ENCODE measurements at regions of chr9 and their contacts with region 1.

Region 1: DNA sequence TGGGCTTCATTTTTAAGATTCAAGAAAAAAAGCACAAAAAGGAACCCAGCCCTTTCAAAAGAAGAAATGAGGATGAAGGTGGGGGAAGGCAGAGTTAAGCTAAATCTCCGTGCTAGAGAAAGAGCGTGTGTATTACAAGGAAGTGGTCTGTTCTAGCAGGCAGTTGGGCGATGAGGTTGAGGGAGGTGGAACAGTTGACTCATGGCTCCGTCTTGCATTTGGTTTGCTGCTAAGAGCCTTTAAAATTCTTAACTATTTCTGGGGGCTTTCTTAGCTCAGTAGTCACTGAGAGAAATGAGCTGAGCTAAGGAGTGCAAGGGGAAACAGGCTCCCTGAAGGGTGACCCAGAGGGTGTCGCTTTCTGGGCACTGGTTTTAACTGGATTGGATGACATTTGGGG is 117.4 kb downstream of the GCNT1 start:
- DNase-seq: peak; percentile 57
- H3K4me3 Mint-ChIP-seq: no peak overlapping the region
- H3K27ac Mint-ChIP-seq: peak overlapping the region; percentile 73
- H3K4me1 Mint-ChIP-seq: peaks cover 29% of the 10 kb centered on the region
- H3K27me3 Mint-ChIP-seq: peaks cover 5% of the 10 kb centered on the region

Region 2: GRCh38 chr9:76023715-76024195 is 552.6 kb before region 1 on chr9:
- intact Hi-C with region 1: loop called (anchors 10 kb)
- DNase-seq: peak; percentile 32
- H3K4me3 Mint-ChIP-seq: peak overlapping the region; percentile 64
- H3K27ac Mint-ChIP-seq: peak overlapping the region; percentile 70
- H3K4me1 Mint-ChIP-seq: peaks cover 79% of the 10 kb centered on the region
- H3K27me3 Mint-ChIP-seq: no peaks in the 10 kb centered on the region

Region 3: DNA sequence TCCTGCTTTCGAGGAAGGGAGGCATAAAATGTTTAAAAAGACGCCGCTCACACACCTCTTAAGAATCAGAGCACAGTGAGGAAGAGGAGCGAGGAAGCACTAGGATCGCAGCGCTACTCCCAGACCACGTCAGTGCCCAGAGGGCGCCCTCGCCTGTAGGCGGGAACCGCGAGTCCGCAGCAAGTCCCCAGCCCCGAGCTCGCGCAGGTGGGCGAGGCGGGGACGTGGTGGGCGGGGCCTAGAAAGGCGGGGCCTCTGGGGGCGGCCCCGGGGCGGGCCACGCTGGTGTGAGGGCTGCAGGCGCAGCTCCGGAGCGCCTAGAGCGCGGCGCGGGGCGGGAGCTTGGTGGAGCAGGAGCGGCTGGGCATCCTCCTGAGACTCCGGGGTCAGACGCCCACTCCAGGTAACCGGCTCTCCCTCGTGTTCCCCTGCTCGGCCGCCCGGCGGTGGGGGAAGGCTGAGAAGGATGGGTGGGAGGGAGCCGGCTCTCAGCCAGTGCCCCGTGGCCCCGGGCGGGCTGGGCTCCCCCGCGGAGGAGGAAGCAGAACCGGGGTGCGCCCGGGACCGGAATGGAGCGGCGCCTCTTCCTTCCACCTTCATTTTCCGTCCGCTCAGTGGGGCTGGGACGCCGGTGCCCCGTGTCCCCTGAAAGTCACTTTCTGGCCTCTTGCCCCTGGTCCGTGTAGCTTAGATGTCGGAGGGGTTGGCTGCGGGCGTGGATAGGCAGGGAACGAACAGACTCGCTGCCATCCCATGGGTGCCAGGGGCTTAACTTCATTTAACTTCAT is 117.2 kb before region 1 on chr9 and contains the start of gene GCNT1:
- intact Hi-C with region 1: loop called (anchors 2 kb)
- DNase-seq: peak; percentile 91
- H3K4me3 Mint-ChIP-seq: peak within 1 kb of the TSS; percentile 95
- H3K27ac Mint-ChIP-seq: peak within 1 kb of the TSS; percentile 76
- H3K4me1 Mint-ChIP-seq: peaks cover 33% of the 10 kb centered on the region
- H3K27me3 Mint-ChIP-seq: no peaks in the 10 kb centered on the region
- total RNA-seq, gene GCNT1: 12.1 and 15.0 TPM in 2 replicates

Region 4: GRCh38 chr9:76530458-76531110 is 45.8 kb before region 1 on chr9:
- intact Hi-C with region 1: loop called (anchors 5 kb)
- DNase-seq: no peak
- H3K4me3 Mint-ChIP-seq: no peak overlapping the region
- H3K27ac Mint-ChIP-seq: no peak overlapping the region
- H3K4me1 Mint-ChIP-seq: peaks cover 15% of the 10 kb centered on the region
- H3K27me3 Mint-ChIP-seq: no peaks in the 10 kb centered on the region